ENCODE measurements at regions of chr10 and their contacts with region 1.

Region 1: DNA sequence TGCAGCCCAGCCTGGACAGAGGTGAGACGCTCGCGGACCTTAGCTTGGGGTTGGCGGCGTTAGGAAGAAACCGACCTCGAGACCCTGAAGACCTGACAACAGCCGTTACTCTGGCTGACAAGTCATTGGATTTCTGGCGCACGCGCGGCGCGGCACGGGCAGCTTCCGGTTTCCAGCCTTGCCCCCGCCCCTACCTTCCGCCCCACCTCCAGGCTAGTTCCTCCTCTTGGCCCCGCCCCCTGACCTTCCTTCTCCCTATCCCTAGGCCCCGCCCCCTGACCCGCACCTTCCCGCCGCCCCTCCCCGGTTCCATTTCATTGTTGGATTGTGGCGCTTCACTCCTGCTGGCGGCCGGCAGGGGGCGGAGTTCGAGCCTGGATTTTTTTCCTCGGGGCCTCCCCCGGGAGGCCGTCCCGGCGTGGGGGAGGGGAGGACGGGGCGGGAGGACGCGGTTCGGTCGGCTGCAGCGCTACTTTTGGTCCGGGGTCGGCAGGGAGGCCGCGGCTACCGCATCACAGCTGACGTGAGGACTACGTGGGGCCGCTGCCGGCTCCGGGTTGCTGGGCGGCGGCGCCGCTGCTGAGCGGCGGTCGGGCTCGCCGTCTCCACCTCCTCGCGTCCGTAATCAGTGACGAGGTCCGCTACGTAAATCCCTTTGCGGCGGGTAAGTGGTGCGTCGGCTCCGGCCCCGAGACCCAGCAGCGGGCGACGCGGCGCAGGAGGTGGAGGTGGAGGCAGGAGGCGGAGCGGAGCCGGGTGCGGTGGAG is at the start of gene CREM:
- DNase-seq: peak; percentile 99 to 100 (median 99)
- ATAC-seq: peak; percentile 95
- H3K4me3 ChIP-seq: peak within 1 kb of the TSS; percentile 72
- H3K4me1 ChIP-seq: no peaks in the 10 kb centered on the region
- CTCF ChIP-seq: peak; percentile 79
- total RNA-seq, gene CREM: 11.8 to 27.4 (median 13.5) TPM

Region 2: GRCh38 chr10:35195361-35196306 is 68.9 kb after region 1 on chr10:
- intact Hi-C with region 1: loop called (anchors 5 kb)
- DNase-seq: peak in 2 of 3 donors; percentile 51 to 82
- ATAC-seq: peak; percentile 96
- H3K4me3 ChIP-seq: no peak overlapping the region
- H3K4me1 ChIP-seq: no peaks in the 10 kb centered on the region
- CTCF ChIP-seq: peak; percentile 64

Region 3: DNA sequence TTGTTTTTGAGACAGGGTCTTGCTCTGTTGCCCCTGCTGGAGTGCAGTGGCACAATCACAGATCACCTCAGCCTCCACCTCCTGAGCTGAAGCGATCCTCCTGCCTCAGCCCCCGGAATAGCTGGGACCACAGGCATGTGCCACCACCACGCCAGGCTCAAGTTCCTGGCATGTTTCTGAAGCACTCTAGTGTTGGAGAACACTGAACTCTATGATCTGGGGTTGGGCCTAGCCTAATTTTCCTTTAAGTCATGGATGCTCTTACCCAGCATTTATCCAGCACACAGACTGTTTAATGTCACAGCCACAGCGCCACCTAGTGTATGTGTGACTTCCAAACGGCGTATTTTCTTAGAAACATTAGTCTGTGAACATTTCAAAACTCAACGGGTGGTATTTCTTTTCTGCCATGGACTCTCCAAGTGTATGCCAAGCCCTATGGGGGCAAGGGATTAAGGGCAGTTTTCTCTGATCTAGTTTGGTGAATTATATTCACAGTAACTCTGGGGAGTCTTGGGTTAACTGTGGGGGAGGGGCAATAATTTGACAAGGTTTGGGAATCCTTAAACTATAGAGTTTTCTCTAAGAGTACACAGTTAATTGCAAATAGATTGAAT is 91.7 kb after region 1 on chr10:
- intact Hi-C with region 1: loop called in 1 of 2 experiments (anchors 5 kb)
- DNase-seq: peak in 2 of 3 donors; percentile 65 to 95
- ATAC-seq: peak; percentile 84
- H3K4me3 ChIP-seq: no peak overlapping the region
- H3K4me1 ChIP-seq: no peaks in the 10 kb centered on the region
- CTCF ChIP-seq: peak; percentile 41